Common myeloid progenitor, CD34-positive (primary cell): ENCODE measurements at regions of chr13 and their contacts with region 1.

Region 1: DNA sequence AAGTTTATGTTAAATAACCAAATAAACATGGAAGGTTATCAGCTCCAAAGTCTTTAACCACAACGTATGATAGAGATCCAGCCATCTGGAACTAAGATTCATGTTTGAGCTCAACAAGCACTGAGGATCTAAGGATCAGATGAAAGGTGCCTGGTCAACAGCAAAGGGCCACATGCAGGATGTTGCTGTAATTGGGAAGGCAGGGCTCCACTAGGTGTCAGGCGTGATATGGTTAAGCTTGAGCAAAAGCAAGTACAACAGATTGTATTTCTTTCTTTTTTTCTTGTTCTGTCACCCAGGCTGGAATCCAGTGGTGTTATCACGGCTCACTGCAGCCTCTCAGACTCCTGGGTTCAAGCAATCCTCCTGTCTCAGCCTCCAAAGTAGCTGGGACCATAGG is 12.0 kb downstream of the EBPL start:
- DNase-seq: peak; percentile 65 to 78 (median 77)
- H3K4me3 ChIP-seq: no peak overlapping the region
- H3K27ac ChIP-seq: peak overlapping the region in 1 of 2 experiments; percentile 20
- H3K4me1 ChIP-seq: peaks cover 0 to 8% (median 0%) of the 10 kb centered on the region in 4 experiments
- H3K27me3 ChIP-seq: no peaks in the 10 kb centered on the region

Region 2: DNA sequence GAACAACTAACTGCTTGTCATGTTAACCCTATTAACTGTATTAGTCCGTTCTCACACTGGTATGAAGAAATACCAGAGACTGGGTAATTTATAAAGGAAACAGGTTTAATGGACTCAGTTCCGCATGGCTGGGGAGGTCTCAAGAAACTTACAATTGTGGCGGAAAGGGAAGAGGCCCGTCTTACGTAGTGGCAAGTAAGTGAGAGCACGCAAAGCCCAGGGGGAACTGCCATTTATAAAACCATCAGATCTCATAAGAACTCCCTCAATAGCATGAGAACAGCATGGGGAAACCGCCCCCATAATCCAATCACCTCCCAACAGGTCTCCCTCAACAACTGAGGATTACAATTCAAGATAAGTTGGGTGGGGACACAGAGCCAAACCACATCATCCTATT is 148.8 kb before region 1 on chr13:
- CTCF ChIA-PET with region 1: no interaction called
- POLR2A ChIA-PET with region 1: no interaction called
- DNase-seq: peak; percentile 81 to 92 (median 90)
- H3K4me3 ChIP-seq: peak overlapping the region in 3 of 7 experiments; percentile 1 to 11 (median 2)
- H3K27ac ChIP-seq: peak overlapping the region; percentile 64 to 82
- H3K4me1 ChIP-seq: peaks cover 20 to 78% (median 27%) of the 10 kb centered on the region in 4 experiments
- H3K27me3 ChIP-seq: no peaks in the 10 kb centered on the region

Region 3: GRCh38 chr13:49690992-49691886 is 12.0 kb after region 1 on chr13 and contains the start of gene EBPL:
- CTCF ChIA-PET with region 1: interaction called, 30 read pairs
- POLR2A ChIA-PET with region 1: no interaction called
- DNase-seq: peak; percentile 87 to 93 (median 90)
- H3K4me3 ChIP-seq: peak within 1 kb of the TSS; percentile 68 to 97 (median 79)
- H3K27ac ChIP-seq: peak within 1 kb of the TSS; percentile 53 to 84
- H3K4me1 ChIP-seq: peaks cover 19 to 70% (median 42%) of the 10 kb centered on the region in 4 experiments
- H3K27me3 ChIP-seq: no peaks in the 10 kb centered on the region

Region 4: DNA sequence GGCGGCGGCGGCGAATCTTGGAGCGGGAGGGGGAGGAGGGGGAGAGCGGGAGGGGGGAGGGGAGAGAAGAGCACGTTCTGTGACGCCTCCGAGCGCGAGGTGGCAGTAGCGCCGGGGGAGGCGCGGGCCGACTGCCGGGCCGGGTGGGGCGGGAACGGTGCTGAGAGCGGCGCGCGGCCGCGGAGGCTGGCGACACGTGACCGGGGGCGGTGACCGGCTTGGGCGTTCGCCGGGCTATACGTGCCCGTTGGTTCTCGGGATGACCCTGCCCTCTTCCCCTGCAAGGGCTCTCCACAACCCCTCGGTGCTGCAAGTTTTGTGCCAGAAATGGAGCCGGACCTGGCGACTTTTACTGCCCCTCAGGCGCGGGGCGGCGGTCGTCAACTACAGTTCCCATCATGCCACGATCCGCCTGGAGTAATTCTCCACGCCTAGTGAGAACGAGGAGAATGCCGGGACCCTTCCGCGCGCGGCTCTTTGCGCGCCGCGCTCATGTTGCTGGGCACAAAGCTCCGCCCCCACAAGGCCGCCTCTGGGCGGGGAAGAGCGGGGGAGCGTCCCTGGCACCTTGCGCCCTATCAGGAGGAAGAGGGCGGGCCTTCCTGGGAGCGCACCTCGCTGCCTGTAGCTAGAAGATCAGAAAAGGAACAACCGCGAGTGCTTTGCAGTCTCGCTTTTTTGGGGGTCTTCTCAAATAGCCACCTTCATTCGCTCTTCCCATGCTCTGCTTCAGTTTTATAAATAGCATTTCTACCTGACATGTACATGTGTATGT is 113.5 kb after region 1 on chr13 and contains the start of gene KPNA3:
- CTCF ChIA-PET with region 1: interaction called, 12 read pairs
- POLR2A ChIA-PET with region 1: no interaction called
- DNase-seq: peak; percentile 96 to 98 (median 98)
- H3K4me3 ChIP-seq: peak within 1 kb of the TSS; percentile 86 to 93 (median 89)
- H3K27ac ChIP-seq: peak within 1 kb of the TSS; percentile 88 to 92
- H3K4me1 ChIP-seq: peaks cover 6 to 35% (median 22%) of the 10 kb centered on the region in 4 experiments
- H3K27me3 ChIP-seq: no peaks in the 10 kb centered on the region